HAP-1 (cell line): ENCODE measurements at regions of chr7 and their contacts with region 1.

Region 1: DNA sequence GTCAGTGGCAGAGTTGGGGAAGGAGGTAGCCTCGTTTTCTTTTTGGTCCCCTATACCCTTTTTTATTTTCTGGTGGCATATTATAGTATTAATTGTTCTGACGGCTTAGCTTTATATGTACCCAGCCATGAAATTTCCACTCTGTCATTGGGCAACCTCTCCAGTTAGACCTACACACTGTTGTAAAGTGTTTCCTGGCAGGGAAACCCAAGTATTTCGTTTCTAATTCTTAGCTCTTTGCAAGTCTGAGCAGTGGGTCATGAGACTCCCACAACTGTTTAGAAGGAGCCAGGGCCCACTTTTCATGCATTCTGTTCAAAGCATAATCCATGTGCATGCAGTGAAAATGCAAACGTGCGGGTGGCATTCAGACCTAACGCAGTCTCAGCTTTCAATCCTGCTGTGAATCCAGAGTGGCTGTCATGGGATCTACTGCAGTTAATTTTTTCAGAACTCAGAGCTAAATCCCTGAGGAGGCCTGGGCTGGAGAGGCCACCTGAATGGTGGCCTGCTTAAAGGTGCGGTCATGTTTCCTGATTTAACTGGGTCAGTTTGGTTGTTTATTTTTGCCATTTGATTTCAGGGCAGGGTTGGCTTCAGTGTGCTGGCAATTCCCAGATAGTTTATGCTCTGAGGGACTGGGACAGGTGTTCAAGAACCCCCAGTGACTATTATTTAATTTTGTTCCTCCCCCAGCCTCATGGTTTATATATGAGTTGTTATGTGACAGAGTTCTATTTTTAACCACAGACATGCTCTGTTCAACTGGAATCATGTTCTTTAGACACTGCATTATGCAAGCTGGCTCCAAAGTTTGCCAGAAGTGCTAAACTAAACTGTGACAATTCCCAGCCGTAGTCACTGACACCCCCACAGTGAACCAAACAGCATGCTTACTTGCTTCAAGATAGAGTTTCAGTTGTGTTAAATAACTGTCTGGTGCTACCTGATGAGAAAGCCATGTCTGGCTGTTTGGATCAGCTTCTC is 27.4 kb upstream of the SYPL1 start:
- DNase-seq: no peak
- H3K4me3 ChIP-seq: no peak overlapping the region
- H3K4me1 ChIP-seq: no peaks in the 10 kb centered on the region
- H3K27me3 ChIP-seq: no peaks in the 10 kb centered on the region

Region 2: GRCh38 chr7:105759670-105760550 is 379.6 kb before region 1 on chr7:
- in situ Hi-C with region 1: loop called (anchors 10 kb)
- DNase-seq: peak; percentile 57 to 60
- H3K4me3 ChIP-seq: no peak overlapping the region
- H3K4me1 ChIP-seq: no peaks in the 10 kb centered on the region; the same call in 1 of the 2 replicates
- H3K27me3 ChIP-seq: no peaks in the 10 kb centered on the region

Region 3: GRCh38 chr7:105776058-105776751 is 363.4 kb before region 1 on chr7:
- in situ Hi-C with region 1: no loop called
- DNase-seq: peak in 1 of 2 experiments; percentile 32
- H3K4me3 ChIP-seq: no peak overlapping the region
- H3K4me1 ChIP-seq: peaks cover 18% of the 10 kb centered on the region
- H3K27me3 ChIP-seq: no peaks in the 10 kb centered on the region

Region 4: DNA sequence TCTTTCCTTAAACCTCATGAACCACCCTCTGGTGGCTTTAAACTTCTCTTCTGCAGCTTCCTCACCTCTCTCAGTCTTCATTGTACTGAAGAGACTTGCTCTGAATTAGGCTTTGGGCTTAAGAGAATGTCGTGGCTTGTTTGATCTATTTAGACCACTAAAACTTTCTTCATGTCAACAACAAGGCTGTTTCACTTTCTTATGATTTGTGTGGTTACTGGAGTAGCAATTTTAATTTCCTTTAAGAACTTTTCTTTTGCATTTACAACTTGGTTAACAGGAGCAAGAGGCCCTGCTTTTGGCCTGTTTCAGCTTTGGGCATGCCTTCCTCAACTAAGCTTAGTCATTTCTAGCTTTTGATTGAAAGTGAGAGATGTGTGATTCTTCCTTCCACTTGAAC is 214.6 kb before region 1 on chr7:
- in situ Hi-C with region 1: no loop called
- DNase-seq: no peak
- H3K4me3 ChIP-seq: no peak overlapping the region
- H3K4me1 ChIP-seq: no peaks in the 10 kb centered on the region
- H3K27me3 ChIP-seq: no peaks in the 10 kb centered on the region

Region 5: DNA sequence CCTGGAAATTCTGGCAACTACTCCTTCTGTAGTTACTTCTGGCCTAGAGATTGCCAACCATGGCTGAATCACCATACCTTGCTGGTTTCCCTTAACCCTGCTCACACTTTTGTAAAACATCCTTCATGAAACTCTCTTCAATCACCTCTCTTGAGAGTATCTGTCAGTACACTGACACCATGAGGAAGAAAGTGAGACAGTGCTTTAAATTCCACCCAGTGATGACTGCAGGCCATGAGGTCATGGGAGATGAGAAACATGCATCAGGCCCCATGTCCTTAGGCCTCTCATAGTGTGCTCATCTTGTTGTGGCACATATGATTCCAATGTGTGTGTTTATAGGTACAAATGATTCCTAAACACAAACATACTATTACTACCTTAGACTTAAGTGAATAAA is 169.8 kb after region 1 on chr7:
- in situ Hi-C with region 1: no loop called
- DNase-seq: no peak
- H3K4me3 ChIP-seq: no peak overlapping the region
- H3K4me1 ChIP-seq: no peaks in the 10 kb centered on the region
- H3K27me3 ChIP-seq: no peaks in the 10 kb centered on the region